ENCODE measurements at regions of chr17 and their contacts with region 1.

Region 1: DNA sequence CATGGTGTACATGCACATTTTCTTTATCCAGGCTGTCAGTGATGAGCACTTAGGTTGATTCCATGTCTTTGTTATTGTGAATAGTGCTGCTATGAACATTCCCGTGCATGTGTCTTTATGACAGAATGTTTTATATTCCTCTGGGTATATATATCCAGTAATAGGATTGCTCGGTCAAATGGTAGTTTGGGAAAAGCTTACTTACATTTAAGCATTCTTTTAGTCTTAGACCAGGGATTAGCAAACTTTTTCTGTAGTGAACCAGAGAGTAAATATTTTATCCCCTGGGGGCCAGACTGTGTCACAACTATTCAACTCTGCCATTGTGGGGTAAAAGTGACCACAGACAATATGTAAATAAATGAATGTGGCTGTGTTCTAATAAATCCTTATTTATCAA is 40.2 kb downstream of the MED13 start:
- DNase-seq: no peak
- H3K4me3 ChIP-seq: no peak overlapping the region
- H3K27ac ChIP-seq: no peak overlapping the region
- H3K27me3 ChIP-seq: no peaks in the 10 kb centered on the region
- CTCF ChIP-seq: no peak

Region 2: DNA sequence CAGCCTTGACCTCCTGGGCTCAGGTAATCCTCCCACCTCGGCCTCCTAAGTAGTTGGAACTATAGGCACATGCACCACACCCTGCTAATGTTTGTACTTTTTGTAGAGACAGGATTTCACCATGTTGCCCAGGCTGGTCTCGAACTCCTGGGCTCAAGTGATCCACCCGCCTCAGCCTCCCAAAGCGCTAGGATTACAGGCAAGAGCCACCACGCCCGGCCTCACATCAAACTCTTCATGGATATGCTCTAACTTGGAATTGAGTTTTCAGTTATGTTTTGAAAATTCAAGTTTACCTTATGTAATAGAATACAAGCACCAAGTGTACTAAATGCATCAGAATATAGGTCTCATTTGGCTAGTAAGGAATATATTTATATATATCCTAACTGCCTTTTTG is 281.1 kb before region 1 on chr17:
- CTCF ChIA-PET with region 1: no interaction called
- POLR2A ChIA-PET with region 1: no interaction called
- DNase-seq: no peak
- H3K4me3 ChIP-seq: no peak overlapping the region
- H3K27ac ChIP-seq: no peak overlapping the region
- H3K27me3 ChIP-seq: no peaks in the 10 kb centered on the region
- CTCF ChIP-seq: no peak

Region 3: DNA sequence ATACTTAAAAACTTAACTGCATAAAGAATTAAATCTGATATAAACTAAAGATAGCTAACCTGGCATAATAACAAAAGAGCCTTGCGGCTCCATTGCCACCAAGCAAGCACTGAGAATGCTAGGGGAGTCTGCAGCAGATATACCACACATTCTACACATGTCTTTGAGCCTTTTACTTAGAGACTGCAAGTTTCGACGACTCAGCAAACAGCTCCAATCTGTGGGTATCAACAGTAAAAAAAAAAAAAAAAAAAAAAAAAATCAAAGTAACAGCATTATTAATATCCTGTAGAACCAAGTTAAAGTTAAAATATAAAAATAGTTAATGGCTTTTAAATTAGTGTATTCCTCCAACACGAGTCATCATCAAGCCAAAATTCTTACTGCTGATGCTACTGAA is 69.3 kb before region 1 on chr17:
- CTCF ChIA-PET with region 1: no interaction called
- POLR2A ChIA-PET with region 1: interaction called, 11 read pairs
- DNase-seq: no peak
- H3K4me3 ChIP-seq: no peak overlapping the region
- H3K27ac ChIP-seq: no peak overlapping the region
- H3K27me3 ChIP-seq: no peaks in the 10 kb centered on the region
- CTCF ChIP-seq: no peak

Measured in AG04450 (cell line).